Activated B cell treated with CpG ODN at 0.5 μM for 24 hours (primary cell): ENCODE measurements at regions of chr2 and their contacts with region 1.

Region 1: DNA sequence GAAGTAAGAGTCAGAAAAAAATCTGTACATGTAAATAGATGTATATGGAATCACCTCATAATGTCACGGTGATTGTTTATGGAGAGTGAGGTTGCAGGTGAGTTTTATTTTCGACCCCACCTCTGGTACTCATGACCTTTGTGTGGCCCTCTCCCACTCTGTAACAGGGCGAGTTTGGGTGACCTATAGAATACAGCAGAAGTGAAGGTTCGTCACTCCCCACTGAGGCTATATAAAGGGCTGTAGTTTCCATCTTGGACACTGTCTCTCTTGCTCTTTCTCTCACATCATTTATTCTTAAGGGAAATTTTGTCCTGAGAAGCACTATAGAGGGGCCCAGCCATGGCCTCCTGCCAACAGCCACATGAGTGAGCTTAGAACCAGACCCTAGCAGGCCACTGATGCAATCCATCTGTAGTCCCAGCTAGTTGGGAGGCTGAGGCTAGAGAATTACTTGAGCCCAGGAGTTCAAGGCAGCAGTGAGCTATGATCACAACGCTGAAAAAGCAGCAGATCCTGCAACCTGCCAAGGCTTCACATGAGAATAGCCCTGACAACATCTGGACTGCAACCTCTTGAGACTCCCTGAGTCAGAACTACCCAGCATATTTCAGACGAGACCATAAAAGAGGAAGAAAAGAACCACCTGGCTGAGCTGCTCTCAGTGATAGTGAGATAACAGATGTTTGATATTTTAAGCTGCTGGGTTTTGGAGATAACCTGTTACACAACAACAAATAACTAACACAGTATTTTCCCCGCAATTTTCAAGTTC is 74.3 kb upstream of the SLC1A4 start:
- DNase-seq: no peak
- ATAC-seq: peak; percentile 73
- H3K4me3 Mint-ChIP-seq: peak overlapping the region; percentile 71
- H3K27ac Mint-ChIP-seq: peak overlapping the region; percentile 94
- H3K4me1 Mint-ChIP-seq: peaks cover 68% of the 10 kb centered on the region
- H3K27me3 Mint-ChIP-seq: no peaks in the 10 kb centered on the region
- CTCF ChIP-seq: no peak

Region 2: DNA sequence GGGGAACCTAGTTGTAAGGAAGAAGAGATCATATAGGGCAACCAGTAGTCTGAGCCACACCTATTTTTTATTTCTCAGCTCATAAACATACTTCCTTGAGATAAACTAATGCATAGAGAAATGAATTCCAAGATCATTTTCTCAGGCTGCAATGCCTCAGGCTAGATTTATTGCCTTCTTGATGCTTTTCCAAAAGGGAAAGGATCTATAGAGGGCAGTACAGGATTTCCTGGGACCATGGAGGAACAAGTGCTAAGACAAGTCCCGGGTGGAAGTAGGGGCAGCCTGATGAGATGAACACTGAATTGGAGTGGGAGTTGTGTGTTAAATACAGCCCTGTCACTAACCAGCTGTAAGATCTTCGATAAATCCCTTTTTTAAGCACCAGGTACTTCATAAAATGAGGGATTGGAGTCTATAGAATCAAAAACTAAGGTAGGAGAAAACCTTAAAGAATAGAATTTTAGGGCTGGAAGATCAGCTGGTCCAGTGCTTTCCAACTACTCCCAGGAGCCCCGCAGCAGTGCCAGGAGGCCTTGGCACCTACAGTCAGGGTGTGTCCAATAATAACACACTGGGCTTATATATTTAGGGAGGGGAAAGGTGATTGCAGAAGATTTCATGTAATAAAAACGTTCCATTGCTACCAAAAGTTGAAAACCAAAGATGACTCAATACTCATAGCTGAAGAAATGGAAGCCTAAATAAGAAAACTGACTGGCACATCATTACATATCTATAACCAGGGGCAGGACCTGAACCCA is 319.3 kb before region 1 on chr2:
- CTCF ChIA-PET with region 1: no interaction called
- POLR2A ChIA-PET with region 1: interaction called, 13 read pairs
- intact Hi-C with region 1: no loop called
- DNase-seq: no peak
- ATAC-seq: no peak
- H3K4me3 Mint-ChIP-seq: no peak overlapping the region
- H3K27ac Mint-ChIP-seq: no peak overlapping the region
- H3K4me1 Mint-ChIP-seq: no peaks in the 10 kb centered on the region
- H3K27me3 Mint-ChIP-seq: no peaks in the 10 kb centered on the region
- CTCF ChIP-seq: no peak

Region 3: GRCh38 chr2:64873472-64873924 is 41.4 kb before region 1 on chr2:
- CTCF ChIA-PET with region 1: no interaction called
- POLR2A ChIA-PET with region 1: interaction called, 5 read pairs
- intact Hi-C with region 1: loop called (anchors 1 kb)
- DNase-seq: peak; percentile 86
- ATAC-seq: peak; percentile 99
- H3K4me3 Mint-ChIP-seq: peak overlapping the region; percentile 52
- H3K27ac Mint-ChIP-seq: no peak overlapping the region
- H3K4me1 Mint-ChIP-seq: peaks cover 8% of the 10 kb centered on the region
- H3K27me3 Mint-ChIP-seq: no peaks in the 10 kb centered on the region
- CTCF ChIP-seq: peak; percentile 90

Region 4: GRCh38 chr2:64988420-64989125 is 73.7 kb after region 1 on chr2:
- CTCF ChIA-PET with region 1: interaction called, 35 read pairs
- POLR2A ChIA-PET with region 1: interaction called, 102 read pairs
- intact Hi-C with region 1: loop called (anchors 1 kb)
- DNase-seq: peak; percentile 62
- ATAC-seq: peak; percentile 43
- H3K4me3 Mint-ChIP-seq: peak overlapping the region; percentile 85
- H3K27ac Mint-ChIP-seq: peak overlapping the region; percentile 87
- H3K4me1 Mint-ChIP-seq: peaks cover 40% of the 10 kb centered on the region
- H3K27me3 Mint-ChIP-seq: no peaks in the 10 kb centered on the region
- CTCF ChIP-seq: no peak

Region 5: DNA sequence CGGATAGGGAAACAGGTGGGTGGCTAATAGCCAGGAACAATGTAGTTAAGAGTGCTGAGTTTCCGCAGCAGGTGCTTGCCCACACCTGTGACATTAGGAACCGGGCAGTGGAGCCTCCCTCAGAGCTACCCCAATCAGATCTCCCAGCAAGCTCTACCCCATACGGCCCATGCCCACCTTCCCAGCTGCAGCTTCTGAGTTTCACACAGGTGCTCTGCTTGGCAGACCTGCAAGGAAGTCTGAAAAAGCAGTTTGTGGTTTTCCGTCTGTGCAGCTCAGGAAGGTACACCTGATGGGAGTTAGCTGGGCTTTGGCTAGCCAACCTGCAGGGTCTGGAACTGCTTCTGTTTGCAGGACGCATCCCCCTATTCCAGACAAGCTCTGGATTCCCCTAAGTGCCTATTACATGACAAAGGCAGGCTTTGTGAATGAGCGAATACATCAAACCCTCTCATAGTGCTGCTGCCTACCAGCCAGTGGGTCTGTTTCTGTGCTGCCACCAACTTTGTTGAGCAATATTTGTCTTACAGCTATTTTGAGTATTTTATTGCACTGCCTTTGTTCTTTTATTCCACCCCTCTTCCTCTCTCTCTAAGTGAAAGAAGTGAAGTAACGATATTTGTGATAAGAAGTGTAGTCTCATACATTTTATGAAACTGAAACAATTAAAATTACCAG is 116.6 kb after region 1 on chr2:
- CTCF ChIA-PET with region 1: interaction called, 186 read pairs
- POLR2A ChIA-PET with region 1: interaction called, 60 read pairs
- intact Hi-C with region 1: loop called (anchors 1 kb)
- DNase-seq: no peak
- ATAC-seq: peak; percentile 8
- H3K4me3 Mint-ChIP-seq: peak overlapping the region; percentile 80
- H3K27ac Mint-ChIP-seq: peak overlapping the region; percentile 86
- H3K4me1 Mint-ChIP-seq: peaks cover 66% of the 10 kb centered on the region
- H3K27me3 Mint-ChIP-seq: no peaks in the 10 kb centered on the region
- CTCF ChIP-seq: no peak

Region 6: DNA sequence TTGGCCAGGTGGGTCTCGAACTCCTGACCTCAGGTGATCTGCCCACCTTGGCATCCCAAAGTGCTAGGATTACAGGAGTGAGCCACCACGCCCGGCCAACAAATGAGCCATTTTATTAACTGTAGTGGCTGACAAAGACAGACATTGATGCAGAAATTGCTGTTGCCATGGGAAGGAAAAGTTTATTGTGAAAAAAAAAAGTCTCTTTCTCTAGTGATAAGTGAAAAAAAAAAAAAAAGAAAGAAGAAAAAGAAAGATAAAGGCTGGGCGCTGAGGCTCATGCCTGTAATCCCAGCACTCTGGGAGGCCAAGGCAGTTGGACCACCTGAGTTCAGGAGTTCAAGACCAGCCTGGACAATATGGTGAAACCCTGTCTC is 254.8 kb after region 1 on chr2:
- CTCF ChIA-PET with region 1: interaction called, 5 read pairs
- POLR2A ChIA-PET with region 1: no interaction called
- intact Hi-C with region 1: loop called (anchors 1 kb)
- DNase-seq: no peak
- ATAC-seq: no peak
- H3K4me3 Mint-ChIP-seq: no peak overlapping the region
- H3K27ac Mint-ChIP-seq: no peak overlapping the region
- H3K4me1 Mint-ChIP-seq: peaks cover 16% of the 10 kb centered on the region
- H3K27me3 Mint-ChIP-seq: no peaks in the 10 kb centered on the region
- CTCF ChIP-seq: no peak